Endothelial cell of umbilical vein (primary cell): ENCODE measurements at regions of chr1 and their contacts with region 1.

Region 1: DNA sequence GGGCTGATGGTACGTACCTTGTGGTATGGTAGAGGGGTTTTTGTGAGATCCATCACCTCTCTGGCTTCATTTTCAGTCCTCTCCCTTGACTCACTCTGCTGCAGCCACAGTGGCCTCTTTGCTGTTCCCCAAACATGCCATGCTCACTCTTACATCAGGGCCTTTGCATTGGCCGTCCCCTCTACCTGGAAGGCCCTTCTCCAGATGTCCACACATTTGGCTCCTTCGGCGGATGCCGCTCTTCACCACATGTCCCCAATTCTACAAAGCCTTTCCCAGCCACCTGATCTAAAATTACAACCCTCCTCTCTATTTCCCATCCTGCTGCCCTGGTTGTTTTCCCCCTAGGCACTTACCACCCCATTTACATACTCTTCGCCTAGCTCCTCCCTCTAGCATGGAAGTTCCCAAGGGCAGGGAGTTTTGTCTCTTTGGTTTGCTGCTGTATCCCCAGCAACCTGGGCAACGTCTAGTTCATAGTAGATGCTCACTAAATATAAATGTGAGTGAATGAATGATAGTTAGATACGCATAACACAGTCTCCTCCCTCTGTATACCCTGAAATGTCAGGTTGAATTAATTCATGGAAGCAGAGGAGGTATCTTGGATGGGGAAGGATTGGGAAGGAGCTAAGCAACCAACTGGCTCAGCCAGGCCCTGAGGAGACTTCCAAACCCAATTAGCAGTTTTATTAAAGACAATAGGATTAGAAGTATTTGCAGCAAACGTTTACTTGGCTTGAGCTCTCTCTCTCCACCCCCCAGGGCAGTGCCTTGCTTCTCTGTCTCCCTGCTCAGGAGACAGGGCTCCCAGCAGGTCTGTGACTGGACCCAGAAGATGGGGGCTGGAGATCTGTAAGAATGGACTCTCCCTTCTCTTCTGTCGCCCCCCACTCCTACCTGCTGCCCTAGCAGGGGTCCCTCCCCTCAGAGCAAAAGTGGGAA is 264.2 kb downstream of the GRIK3 start:
- DNase-seq: no peak
- H3K4me3 ChIP-seq: no peak overlapping the region
- H3K27ac ChIP-seq: no peak overlapping the region
- H3K4me1 ChIP-seq: no peaks in the 10 kb centered on the region
- H3K27me3 ChIP-seq: peaks cover 11 to 17% of the 10 kb centered on the region in 2 experiments
- CTCF ChIP-seq: no peak
- POLR2A ChIP-seq: no peak

Region 2: DNA sequence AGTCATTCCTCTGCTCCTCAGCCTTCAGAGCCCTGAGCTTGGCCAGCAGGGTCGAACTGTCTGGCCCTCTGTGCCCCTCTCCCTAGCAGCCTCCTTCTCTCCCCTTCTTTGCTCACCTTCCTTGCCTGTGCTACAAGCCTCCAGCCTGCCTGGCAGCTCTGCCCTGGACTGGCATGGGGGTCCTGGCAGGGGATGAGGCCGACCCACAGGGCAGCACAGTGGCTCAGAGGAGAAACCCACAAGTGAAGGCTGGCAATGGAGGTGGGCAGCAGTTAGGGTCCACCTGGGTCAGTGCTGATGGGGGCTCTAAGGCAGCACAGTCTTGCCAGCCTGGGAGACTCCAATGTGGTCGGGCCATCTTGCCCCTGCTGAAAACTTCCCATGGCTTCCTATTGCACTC is 10.1 kb before region 1 on chr1:
- CTCF ChIA-PET with region 1: interaction called, 4 read pairs
- POLR2A ChIA-PET with region 1: interaction called, 13 read pairs
- dilution Hi-C with region 1: no loop called
- intact Hi-C with region 1: no loop called
- DNase-seq: no peak
- H3K4me3 ChIP-seq: no peak overlapping the region
- H3K27ac ChIP-seq: no peak overlapping the region
- H3K4me1 ChIP-seq: peaks cover 13% of the 10 kb centered on the region
- H3K27me3 ChIP-seq: no peaks in the 10 kb centered on the region
- CTCF ChIP-seq: no peak
- POLR2A ChIP-seq: no peak